Ovary (tissue), 10 donors: ENCODE measurements at regions of chr3 and their contacts with region 1.

Region 1: DNA sequence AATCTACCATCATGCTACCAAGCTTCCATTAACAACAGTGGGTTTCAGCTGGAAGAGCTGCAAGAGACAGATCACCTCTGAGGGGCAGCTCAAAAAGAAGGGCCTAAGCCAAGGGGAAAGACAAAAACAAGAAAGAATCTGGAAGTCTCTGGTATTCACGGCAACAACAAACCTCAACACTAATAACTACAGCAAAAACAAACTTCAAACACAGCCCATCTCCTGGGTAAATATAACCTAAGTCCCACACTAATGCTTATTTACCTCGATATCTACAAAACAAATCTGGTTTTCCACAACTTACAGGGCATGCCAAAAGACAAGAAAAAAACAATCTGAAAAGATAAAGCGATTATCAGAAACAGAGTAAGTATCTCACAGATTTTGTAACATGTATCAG is 29.7 kb downstream of the TOP2B start:
- DNase-seq: no peak
- H3K4me3 ChIP-seq: no peak overlapping the region
- H3K27ac ChIP-seq: no peak overlapping the region
- H3K4me1 ChIP-seq: peaks cover 2% of the 10 kb centered on the region
- H3K27me3 ChIP-seq: no peaks in the 10 kb centered on the region
- CTCF ChIP-seq: no peak
- EP300 ChIP-seq: no peak
- POLR2A ChIP-seq: no peak

Region 2: GRCh38 chr3:25448750-25449692 is 186.0 kb before region 1 on chr3:
- intact Hi-C with region 1: no loop called
- DNase-seq: peak; percentile 67 to 86 (median 76)
- H3K4me3 ChIP-seq: no peak overlapping the region
- H3K27ac ChIP-seq: no peak overlapping the region
- H3K4me1 ChIP-seq: no peaks in the 10 kb centered on the region
- H3K27me3 ChIP-seq: no peaks in the 10 kb centered on the region
- CTCF ChIP-seq: no peak
- EP300 ChIP-seq: no peak
- POLR2A ChIP-seq: no peak

Region 3: DNA sequence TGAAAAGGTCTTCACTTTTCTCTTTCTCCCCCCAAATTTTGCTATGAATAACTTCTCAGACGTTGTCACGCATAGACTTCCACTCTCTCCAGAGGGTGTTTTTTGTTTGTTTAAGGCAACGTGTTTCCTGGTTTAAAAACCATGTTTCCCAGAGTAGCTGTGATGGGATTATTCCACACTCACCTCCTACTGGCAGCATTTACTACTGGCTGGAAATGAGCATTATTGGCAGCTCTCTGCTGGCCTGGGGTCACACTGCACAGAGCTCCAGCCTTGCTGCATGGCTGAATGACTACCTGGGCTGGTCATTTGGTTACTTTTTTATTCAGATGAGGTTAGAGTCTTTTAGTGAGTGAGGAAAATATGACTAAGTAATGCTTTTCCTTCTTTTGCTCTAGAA is 141.8 kb before region 1 on chr3:
- intact Hi-C with region 1: no loop called
- DNase-seq: no peak
- H3K4me3 ChIP-seq: no peak overlapping the region
- H3K27ac ChIP-seq: no peak overlapping the region
- H3K4me1 ChIP-seq: no peaks in the 10 kb centered on the region
- H3K27me3 ChIP-seq: no peaks in the 10 kb centered on the region
- CTCF ChIP-seq: no peak
- EP300 ChIP-seq: no peak
- POLR2A ChIP-seq: no peak

Region 4: GRCh38 chr3:25503898-25504298 is 131.1 kb before region 1 on chr3:
- intact Hi-C with region 1: no loop called
- DNase-seq: no peak
- H3K4me3 ChIP-seq: no peak overlapping the region
- H3K27ac ChIP-seq: no peak overlapping the region
- H3K4me1 ChIP-seq: no peaks in the 10 kb centered on the region
- H3K27me3 ChIP-seq: no peaks in the 10 kb centered on the region
- CTCF ChIP-seq: no peak
- EP300 ChIP-seq: no peak
- POLR2A ChIP-seq: no peak

Region 5: GRCh38 chr3:25768851-25769250 is 133.8 kb after region 1 on chr3:
- intact Hi-C with region 1: no loop called
- DNase-seq: no peak
- H3K4me3 ChIP-seq: no peak overlapping the region
- H3K27ac ChIP-seq: no peak overlapping the region
- H3K4me1 ChIP-seq: no peaks in the 10 kb centered on the region
- H3K27me3 ChIP-seq: no peaks in the 10 kb centered on the region
- CTCF ChIP-seq: no peak
- EP300 ChIP-seq: no peak
- POLR2A ChIP-seq: no peak

Region 6: GRCh38 chr3:26118165-26118564 is 483.1 kb after region 1 on chr3:
- intact Hi-C with region 1: loop called in 1 of 4 experiments (anchors 5 kb)
- DNase-seq: no peak
- H3K4me3 ChIP-seq: no peak overlapping the region
- H3K27ac ChIP-seq: no peak overlapping the region
- H3K4me1 ChIP-seq: no peaks in the 10 kb centered on the region
- H3K27me3 ChIP-seq: no peaks in the 10 kb centered on the region
- CTCF ChIP-seq: no peak
- EP300 ChIP-seq: no peak
- POLR2A ChIP-seq: no peak